Ovary (tissue), 10 donors: ENCODE measurements at regions of chr2 and their contacts with region 1.

Region 1: GRCh38 chr2:133109772-133110171 is 439.8 kb upstream of the LYPD1 start:
- DNase-seq: no peak
- H3K4me3 ChIP-seq: no peak overlapping the region
- H3K27ac ChIP-seq: no peak overlapping the region
- H3K4me1 ChIP-seq: no peaks in the 10 kb centered on the region
- H3K27me3 ChIP-seq: no peaks in the 10 kb centered on the region
- CTCF ChIP-seq: no peak
- EP300 ChIP-seq: no peak
- POLR2A ChIP-seq: no peak

Region 2: DNA sequence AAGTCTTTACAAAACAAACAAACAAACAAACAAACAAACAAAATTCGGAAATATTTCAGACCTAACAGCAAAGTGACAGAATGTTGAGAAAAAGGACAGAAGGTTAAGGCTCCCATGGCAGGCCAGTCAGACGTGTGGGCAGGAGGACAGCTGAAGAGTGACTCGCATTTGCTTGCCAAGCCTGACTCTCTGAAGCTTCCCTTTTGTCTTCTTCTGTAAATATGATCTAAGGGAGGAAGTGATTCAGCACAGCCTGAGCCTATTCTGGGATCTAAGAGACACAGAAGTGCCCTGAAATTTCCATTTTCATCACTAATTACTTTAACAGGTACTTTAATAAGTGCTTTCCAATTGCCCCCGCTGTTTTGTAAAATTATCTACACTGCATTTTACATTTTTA is 305.7 kb before region 1 on chr2:
- intact Hi-C with region 1: no loop called
- DNase-seq: no peak
- H3K4me3 ChIP-seq: no peak overlapping the region
- H3K27ac ChIP-seq: no peak overlapping the region
- H3K4me1 ChIP-seq: no peaks in the 10 kb centered on the region
- H3K27me3 ChIP-seq: no peaks in the 10 kb centered on the region
- CTCF ChIP-seq: no peak
- EP300 ChIP-seq: no peak
- POLR2A ChIP-seq: no peak

Region 3: GRCh38 chr2:133421516-133422312 is 311.9 kb after region 1 on chr2:
- intact Hi-C with region 1: loop called in 1 of 4 experiments (anchors 10 kb)
- DNase-seq: no peak
- H3K4me3 ChIP-seq: no peak overlapping the region
- H3K27ac ChIP-seq: no peak overlapping the region
- H3K4me1 ChIP-seq: peaks cover 5% of the 10 kb centered on the region
- H3K27me3 ChIP-seq: no peaks in the 10 kb centered on the region
- CTCF ChIP-seq: no peak
- EP300 ChIP-seq: no peak
- POLR2A ChIP-seq: no peak